H1 (cell line): ENCODE measurements at regions of chr6 and their contacts with region 1.

Region 1: GRCh38 chr6:33430991-33431879 is 11.4 kb downstream of the SYNGAP1 start:
- DNase-seq: peak in 1 of 2 experiments; percentile 93
- H3K4me3 ChIP-seq: peak overlapping the region; percentile 31 to 61 (median 56)
- H3K27ac ChIP-seq: peak overlapping the region; percentile 98
- H3K4me1 ChIP-seq: peaks cover 15 to 43% (median 28%) of the 10 kb centered on the region in 4 experiments
- H3K27me3 ChIP-seq: no peaks in the 10 kb centered on the region
- CTCF ChIP-seq: no peak
- EP300 ChIP-seq: peak in 1 of 2 experiments; percentile 88; a peak in 2 of 3 replicates
- POLR2A ChIP-seq: peak in 1 of 2 experiments; percentile 54; a peak in 2 of 3 replicates
- RAD21 ChIP-seq: no peak

Region 2: GRCh38 chr6:33147807-33148666 is 283.2 kb before region 1 on chr6:
- CTCF ChIA-PET with region 1: no interaction called
- POLR2A ChIA-PET with region 1: no interaction called
- DNase-seq: no peak
- H3K4me3 ChIP-seq: no peak overlapping the region
- H3K27ac ChIP-seq: no peak overlapping the region
- H3K4me1 ChIP-seq: peaks cover 0 to 2% (median 0%) of the 10 kb centered on the region in 4 experiments; a peak in 1 of 7 replicates
- H3K27me3 ChIP-seq: no peaks in the 10 kb centered on the region
- CTCF ChIP-seq: peak in 2 of 3 experiments; percentile 61 to 72; a peak in 3 of 4 replicates
- EP300 ChIP-seq: no peak
- POLR2A ChIP-seq: no peak
- RAD21 ChIP-seq: peak; percentile 75 to 80

Region 3: GRCh38 chr6:33235221-33235634 is 196.0 kb before region 1 on chr6:
- CTCF ChIA-PET with region 1: no interaction called
- POLR2A ChIA-PET with region 1: no interaction called
- DNase-seq: no peak
- H3K4me3 ChIP-seq: no peak overlapping the region
- H3K27ac ChIP-seq: no peak overlapping the region
- H3K4me1 ChIP-seq: peaks cover 0 to 3% (median 2%) of the 10 kb centered on the region in 4 experiments; a peak in 3 of 7 replicates
- H3K27me3 ChIP-seq: peaks cover 0 to 3% (median 0%) of the 10 kb centered on the region in 4 experiments; a peak in 1 of 7 replicates
- CTCF ChIP-seq: no peak
- EP300 ChIP-seq: no peak
- POLR2A ChIP-seq: no peak
- RAD21 ChIP-seq: no peak

Region 4: DNA sequence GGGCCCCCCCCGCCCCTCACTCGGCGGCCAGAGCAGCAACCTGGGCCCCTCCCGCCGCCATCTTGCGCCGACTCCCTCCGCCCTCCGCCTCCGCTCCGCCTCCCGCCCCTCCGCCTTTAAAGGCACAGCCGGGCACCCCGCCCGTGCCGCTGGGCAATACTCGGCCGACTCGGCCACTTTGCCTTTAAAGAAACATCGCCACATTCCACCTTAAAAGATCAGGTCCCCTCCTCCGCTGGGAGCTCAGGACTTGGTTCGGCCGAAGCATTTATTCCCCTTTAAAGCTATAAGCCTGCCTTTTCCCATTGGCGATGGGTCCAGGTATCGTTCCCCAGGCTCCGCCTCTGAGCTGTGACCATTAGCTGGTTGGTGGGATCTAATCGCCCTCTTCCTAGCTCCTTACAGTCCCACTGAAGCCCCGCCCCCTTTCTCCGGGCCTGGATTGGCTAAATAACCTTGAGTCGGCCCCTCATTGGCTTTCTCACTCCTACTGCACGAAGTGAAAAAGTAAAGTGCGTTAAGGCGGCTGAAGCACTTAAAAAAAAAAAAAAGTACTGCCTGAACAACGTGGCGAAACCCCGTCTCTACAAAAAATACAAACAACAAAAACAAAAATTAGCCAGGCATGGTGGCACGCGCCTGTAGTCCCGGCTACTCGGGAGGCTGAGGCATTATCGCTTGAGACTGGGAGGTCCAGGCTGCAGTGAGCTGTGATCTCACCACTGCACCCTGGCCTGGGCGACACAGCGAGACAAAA is 113.4 kb before region 1 on chr6 and contains the start of gene ZBTB22:
- CTCF ChIA-PET with region 1: interaction called, 4 read pairs
- POLR2A ChIA-PET with region 1: interaction called, 10 read pairs
- DNase-seq: peak; percentile 95 to 96
- H3K4me3 ChIP-seq: peak within 1 kb of the TSS; percentile 67 to 89 (median 78)
- H3K27ac ChIP-seq: peak within 1 kb of the TSS; percentile 83
- H3K4me1 ChIP-seq: peaks cover 0 to 34% (median 22%) of the 10 kb centered on the region in 4 experiments; a peak in 6 of 7 replicates
- H3K27me3 ChIP-seq: no peaks in the 10 kb centered on the region
- CTCF ChIP-seq: no peak
- EP300 ChIP-seq: no peak
- POLR2A ChIP-seq: peak in 1 of 2 experiments; percentile 70; a peak in 2 of 3 replicates
- RAD21 ChIP-seq: no peak
- total RNA-seq, gene ZBTB22: 9.8 and 9.9 TPM in 2 replicates

Region 5: GRCh38 chr6:33410050-33410710 is 21.1 kb before region 1 on chr6:
- CTCF ChIA-PET with region 1: interaction called, 37 read pairs
- POLR2A ChIA-PET with region 1: interaction called, 24 read pairs
- DNase-seq: peak; percentile 89 to 97
- H3K4me3 ChIP-seq: peak overlapping the region; percentile 45 to 87 (median 59)
- H3K27ac ChIP-seq: peak overlapping the region; percentile 52
- H3K4me1 ChIP-seq: peaks cover 0 to 6% (median 2%) of the 10 kb centered on the region in 4 experiments; a peak in 5 of 7 replicates
- H3K27me3 ChIP-seq: no peaks in the 10 kb centered on the region
- CTCF ChIP-seq: no peak
- EP300 ChIP-seq: peak in 1 of 2 experiments; percentile 49; a peak in 1 of 3 replicates
- POLR2A ChIP-seq: no peak
- RAD21 ChIP-seq: no peak

Region 6: GRCh38 chr6:33417903-33418689 is 13.1 kb before region 1 on chr6 and contains the start of gene CUTA:
- CTCF ChIA-PET with region 1: interaction called, 37 read pairs
- POLR2A ChIA-PET with region 1: interaction called, 82 read pairs
- DNase-seq: peak; percentile 92 to 99
- H3K4me3 ChIP-seq: peak within 1 kb of the TSS; percentile 75 to 99 (median 93)
- H3K27ac ChIP-seq: peak within 1 kb of the TSS; percentile 89
- H3K4me1 ChIP-seq: peaks cover 8 to 34% (median 15%) of the 10 kb centered on the region in 4 experiments
- H3K27me3 ChIP-seq: no peaks in the 10 kb centered on the region
- CTCF ChIP-seq: peak in 1 of 3 experiments; percentile 64; a peak in 2 of 4 replicates
- EP300 ChIP-seq: peak in 1 of 2 experiments; percentile 62; a peak in 1 of 3 replicates
- POLR2A ChIP-seq: 0 out of 3 replicates have a peak, but pooled peaks of 1 of the 2 experiments have one; percentile 4
- RAD21 ChIP-seq: peak in 1 of 2 experiments; percentile 5; a peak in 1 of 4 replicates
- total RNA-seq, gene CUTA: 297 and 315 TPM in 2 replicates

Region 7: DNA sequence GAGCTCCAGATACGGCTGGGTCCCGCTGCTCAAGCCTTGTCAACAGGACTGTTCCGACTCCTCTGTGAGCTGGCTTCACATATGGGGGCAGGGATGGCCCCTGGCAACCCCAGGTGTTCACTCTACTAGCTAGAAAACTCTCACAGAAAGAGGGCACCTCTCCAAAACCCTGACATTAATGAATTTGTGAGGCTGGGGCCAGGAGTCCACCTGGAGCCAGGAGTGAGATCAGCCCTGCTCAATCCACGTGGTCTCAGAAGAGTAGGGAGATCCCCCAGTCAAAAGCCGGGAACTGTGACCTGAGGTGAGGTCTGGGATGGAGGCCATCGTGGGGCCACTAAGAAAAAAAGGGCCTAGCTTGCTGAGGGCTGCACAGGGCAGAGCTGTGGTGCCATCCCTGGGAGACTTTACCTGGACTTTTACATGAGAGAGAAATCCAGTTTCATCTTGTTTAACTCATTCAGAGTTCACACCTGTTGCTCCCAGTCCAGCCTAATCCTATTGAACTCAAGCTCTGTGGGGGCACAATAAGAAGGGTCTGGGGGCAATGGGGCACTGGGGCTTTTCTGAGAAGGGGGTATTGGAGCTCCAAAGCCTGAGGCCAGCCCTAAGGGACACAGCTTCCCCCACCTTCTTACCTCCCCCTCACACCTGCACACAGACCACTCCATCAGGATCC is 516.8 kb after region 1 on chr6:
- CTCF ChIA-PET with region 1: no interaction called
- POLR2A ChIA-PET with region 1: no interaction called
- DNase-seq: no peak
- H3K4me3 ChIP-seq: no peak overlapping the region
- H3K27ac ChIP-seq: no peak overlapping the region
- H3K4me1 ChIP-seq: peaks cover 0 to 12% (median 8%) of the 10 kb centered on the region in 4 experiments; a peak in 6 of 7 replicates
- H3K27me3 ChIP-seq: no peaks in the 10 kb centered on the region; a peak in 3 of 7 replicates
- CTCF ChIP-seq: no peak
- EP300 ChIP-seq: no peak
- POLR2A ChIP-seq: no peak
- RAD21 ChIP-seq: no peak